Ascending aorta (tissue), 2 donors: ENCODE measurements at regions of chr6 and their contacts with region 1.

Region 1: GRCh38 chr6:137641474-137642077 is 147.4 kb upstream of the OLIG3 start:
- DNase-seq: peak in 1 of 2 donors; percentile 77
- H3K4me3 ChIP-seq: no peak overlapping the region
- H3K27ac ChIP-seq: no peak overlapping the region
- H3K4me1 ChIP-seq: peaks cover 0 to 4% of the 10 kb centered on the region in 2 donors
- H3K27me3 ChIP-seq: no peaks in the 10 kb centered on the region
- CTCF ChIP-seq: peak; percentile 29 to 53 (median 46)

Region 2: GRCh38 chr6:137076277-137077068 is 565.1 kb before region 1 on chr6:
- intact Hi-C with region 1: loop called (anchors 5 kb)
- DNase-seq: peak in 1 of 2 donors; percentile 67
- H3K4me3 ChIP-seq: no peak overlapping the region
- H3K27ac ChIP-seq: no peak overlapping the region
- H3K4me1 ChIP-seq: no peaks in the 10 kb centered on the region
- H3K27me3 ChIP-seq: no peaks in the 10 kb centered on the region
- CTCF ChIP-seq: peak; percentile 35 to 58 (median 45)

Region 3: DNA sequence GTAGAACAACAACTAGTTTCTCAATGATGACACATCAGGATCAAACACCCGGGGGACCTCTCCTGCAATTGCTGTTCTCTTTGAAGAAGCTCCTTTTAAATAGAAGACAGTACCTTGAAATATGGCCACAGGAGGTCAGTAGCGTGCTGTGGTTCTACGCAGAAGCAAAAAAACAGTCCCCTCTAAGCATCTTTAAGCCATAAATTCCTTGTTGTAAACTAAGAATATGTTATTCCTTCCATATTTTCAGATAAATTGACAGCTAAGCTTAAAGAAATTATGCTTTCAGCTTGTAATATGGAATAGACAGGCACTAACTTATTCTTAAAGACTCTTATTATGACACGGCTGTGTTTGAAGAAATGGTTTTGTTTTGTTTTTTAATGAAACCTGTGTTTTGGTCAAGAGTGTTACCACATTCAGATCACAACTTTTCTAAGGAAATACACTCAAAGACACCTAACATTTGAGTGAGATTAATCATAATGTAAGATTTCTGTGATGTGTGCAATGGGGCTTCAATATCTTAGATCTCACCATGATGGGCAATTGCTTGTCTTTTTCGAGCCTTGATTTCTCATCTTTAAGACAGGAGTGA is 547.1 kb before region 1 on chr6:
- intact Hi-C with region 1: loop called (anchors 5 kb)
- DNase-seq: peak in 1 of 2 donors; percentile 71
- H3K4me3 ChIP-seq: peak overlapping the region in 1 of 2 donors; percentile 5
- H3K27ac ChIP-seq: no peak overlapping the region
- H3K4me1 ChIP-seq: no peaks in the 10 kb centered on the region
- H3K27me3 ChIP-seq: no peaks in the 10 kb centered on the region
- CTCF ChIP-seq: peak; percentile 47 to 74 (median 50)

Region 4: DNA sequence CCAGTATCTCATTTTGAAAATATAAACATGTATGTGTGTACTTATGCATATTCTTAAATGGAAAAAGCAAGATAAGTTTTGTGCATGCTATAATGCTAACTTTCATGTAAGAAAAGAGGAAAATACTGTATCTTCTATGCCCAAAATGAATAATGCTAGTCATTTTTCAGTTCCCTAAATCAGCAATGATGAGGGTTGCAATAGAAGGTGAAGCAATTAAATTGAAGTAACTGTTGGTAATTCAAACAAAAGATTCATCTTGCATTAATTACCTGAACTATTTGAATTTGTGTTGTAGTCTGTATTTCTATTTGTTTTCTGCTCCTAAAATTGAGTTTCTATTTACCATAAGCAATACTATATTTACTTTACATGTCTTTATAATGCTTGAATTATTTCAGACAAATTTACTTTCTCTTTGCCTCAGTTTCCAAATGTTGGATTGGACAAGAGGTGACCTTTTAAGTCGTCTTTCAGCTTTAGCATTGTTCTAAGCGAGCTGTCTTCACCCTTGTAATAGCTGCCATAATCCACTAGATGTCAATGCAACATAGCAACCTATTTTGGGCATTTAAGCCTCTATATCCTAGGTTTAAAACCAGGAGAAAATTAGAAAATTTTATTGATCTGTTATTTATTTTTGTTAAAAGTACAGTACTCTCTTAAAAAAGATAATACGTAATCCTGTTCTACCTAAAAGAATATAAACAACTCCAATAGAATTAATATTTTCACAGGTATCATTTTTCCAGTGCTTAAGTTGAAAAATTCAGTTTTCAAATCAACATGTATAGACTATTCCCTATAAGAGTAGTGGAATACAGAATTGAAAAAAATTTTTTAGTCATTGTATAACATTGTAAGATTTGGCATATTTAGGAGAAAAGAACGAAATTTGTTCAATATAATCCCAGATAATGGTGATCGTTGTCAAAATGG is 370.1 kb before region 1 on chr6:
- intact Hi-C with region 1: loop called (anchors 5 kb)
- DNase-seq: no peak
- H3K4me3 ChIP-seq: no peak overlapping the region
- H3K27ac ChIP-seq: no peak overlapping the region
- H3K4me1 ChIP-seq: no peaks in the 10 kb centered on the region
- H3K27me3 ChIP-seq: no peaks in the 10 kb centered on the region
- CTCF ChIP-seq: peak; percentile 58 to 86 (median 85)